ENCODE measurements at regions of chr17 and their contacts with region 1.

Region 1: GRCh38 chr17:73166731-73167581 is 2.1 kb downstream of the SSTR2 start:
- DNase-seq: no peak
- H3K4me3 Mint-ChIP-seq: peak overlapping the region; percentile 83
- H3K27ac Mint-ChIP-seq: peak overlapping the region; percentile 3
- H3K4me1 Mint-ChIP-seq: peaks cover 25% of the 10 kb centered on the region
- H3K27me3 Mint-ChIP-seq: peaks cover 63% of the 10 kb centered on the region

Region 2: DNA sequence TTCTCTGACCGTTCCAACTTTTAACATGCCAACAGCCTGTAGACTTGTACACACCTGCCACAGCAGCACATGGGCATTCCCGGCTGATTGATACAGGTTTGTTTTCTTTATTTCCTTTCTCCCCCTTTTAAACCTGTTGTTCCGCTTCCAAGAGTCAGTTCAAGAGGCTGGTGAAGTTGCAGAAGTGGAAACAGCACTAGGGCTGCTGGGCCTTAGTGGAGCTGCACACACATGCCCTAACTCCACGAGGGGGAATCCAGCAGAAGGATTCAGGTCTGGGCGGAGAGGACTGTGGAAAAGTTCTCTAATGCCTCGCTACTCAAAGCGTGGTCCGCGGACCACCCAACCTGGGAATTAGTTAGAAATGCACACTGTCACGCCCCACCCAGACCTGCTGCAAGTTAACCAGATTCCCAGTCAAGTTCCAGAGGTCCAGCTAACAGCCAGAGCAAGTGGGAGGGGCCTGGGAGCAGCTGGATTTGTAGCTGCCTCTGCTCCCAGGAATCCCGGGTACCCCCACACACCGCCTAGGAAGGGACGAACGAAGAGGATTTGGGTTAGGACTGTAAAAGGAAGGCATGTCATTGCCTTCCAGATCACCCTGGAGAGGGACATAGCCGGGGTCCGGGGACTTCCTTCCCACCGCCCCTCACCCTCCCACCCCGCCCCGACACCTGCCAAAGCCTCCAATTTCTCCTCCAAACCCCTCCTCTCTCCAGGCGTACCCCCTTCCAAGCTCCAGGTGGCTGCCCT is 75.0 kb before region 1 on chr17:
- intact Hi-C with region 1: no loop called
- DNase-seq: peak; percentile 64
- H3K4me3 Mint-ChIP-seq: peak overlapping the region; percentile 100
- H3K27ac Mint-ChIP-seq: peak overlapping the region; percentile 99
- H3K4me1 Mint-ChIP-seq: peaks cover 24% of the 10 kb centered on the region
- H3K27me3 Mint-ChIP-seq: peaks cover 13% of the 10 kb centered on the region

Region 3: GRCh38 chr17:73142872-73143381 is 24.0 kb before region 1 on chr17:
- intact Hi-C with region 1: loop called (anchors 1 kb)
- DNase-seq: peak; percentile 71
- H3K4me3 Mint-ChIP-seq: peak overlapping the region; percentile 27
- H3K27ac Mint-ChIP-seq: peak overlapping the region; percentile 77
- H3K4me1 Mint-ChIP-seq: peaks cover 14% of the 10 kb centered on the region
- H3K27me3 Mint-ChIP-seq: peaks cover 4% of the 10 kb centered on the region